Activated CD4-positive, alpha-beta memory T cell treated with anti-CD3 and anti-CD28 coated beads for 36 hours (primary cell): ENCODE measurements at regions of chr16 and their contacts with region 1.

Region 1: DNA sequence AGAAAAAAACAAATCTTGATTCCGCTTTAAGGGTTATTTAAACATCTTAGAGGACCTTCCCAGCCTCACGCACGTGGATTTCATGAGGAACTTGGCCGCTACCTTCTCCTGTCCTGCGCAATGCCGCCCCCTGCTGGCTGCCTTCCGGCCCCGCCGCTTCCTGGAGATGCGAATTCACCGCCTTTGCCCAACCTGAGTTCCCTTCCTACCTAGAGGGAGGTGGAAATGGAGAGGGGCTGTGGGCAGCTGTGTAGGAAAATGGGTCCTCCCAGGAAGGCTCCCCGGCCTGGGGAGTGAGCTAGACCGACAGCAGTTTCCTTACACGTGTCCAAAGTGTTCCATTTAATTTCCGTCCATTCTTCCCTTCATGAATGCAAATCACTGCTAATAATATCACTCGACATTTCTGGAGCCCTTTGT is 1.0 kb upstream of the ABCC12 start:
- DNase-seq: peak; percentile 89
- H3K4me3 Mint-ChIP-seq: no peak overlapping the region
- H3K27ac Mint-ChIP-seq: no peak overlapping the region
- H3K4me1 Mint-ChIP-seq: peaks cover 26% of the 10 kb centered on the region
- H3K27me3 Mint-ChIP-seq: peaks cover 18% of the 10 kb centered on the region

Region 2: GRCh38 chr16:46947900-46948547 is 1208.8 kb before region 1 on chr16:
- CTCF ChIA-PET with region 1: interaction called, 5 read pairs
- POLR2A ChIA-PET with region 1: no interaction called
- intact Hi-C with region 1: loop called (anchors 2 kb)
- DNase-seq: peak; percentile 57
- H3K4me3 Mint-ChIP-seq: no peak overlapping the region
- H3K27ac Mint-ChIP-seq: peak overlapping the region; percentile 76
- H3K4me1 Mint-ChIP-seq: peaks cover 34% of the 10 kb centered on the region
- H3K27me3 Mint-ChIP-seq: no peaks in the 10 kb centered on the region

Region 3: DNA sequence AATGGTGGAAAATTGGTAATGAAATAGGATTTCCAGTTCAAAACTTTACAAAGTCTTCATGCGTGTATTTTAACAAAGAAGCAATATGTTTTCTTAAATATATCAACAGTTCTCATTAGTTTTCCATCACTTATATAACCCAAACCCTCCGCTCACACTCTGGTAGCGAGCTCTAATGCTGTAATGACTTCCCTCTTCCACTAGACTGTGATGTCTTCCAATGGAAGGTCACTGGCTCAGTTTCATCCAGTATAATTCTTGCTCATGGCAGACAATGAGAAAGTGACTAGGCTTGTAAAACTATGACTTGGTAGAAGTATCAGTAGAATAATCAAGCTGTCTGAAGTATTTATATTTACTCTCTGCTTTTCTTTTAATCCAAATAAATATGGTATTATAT is 1045.9 kb before region 1 on chr16:
- CTCF ChIA-PET with region 1: no interaction called
- POLR2A ChIA-PET with region 1: no interaction called
- intact Hi-C with region 1: loop called (anchors 1 kb)
- DNase-seq: no peak
- H3K4me3 Mint-ChIP-seq: no peak overlapping the region
- H3K27ac Mint-ChIP-seq: no peak overlapping the region
- H3K4me1 Mint-ChIP-seq: peaks cover 21% of the 10 kb centered on the region
- H3K27me3 Mint-ChIP-seq: no peaks in the 10 kb centered on the region

Region 4: GRCh38 chr16:47574091-47575054 is 582.4 kb before region 1 on chr16:
- CTCF ChIA-PET with region 1: no interaction called
- POLR2A ChIA-PET with region 1: no interaction called
- intact Hi-C with region 1: loop called (anchors 10 kb)
- DNase-seq: peak; percentile 67
- H3K4me3 Mint-ChIP-seq: peak overlapping the region; percentile 26
- H3K27ac Mint-ChIP-seq: peak overlapping the region; percentile 80
- H3K4me1 Mint-ChIP-seq: peaks cover 64% of the 10 kb centered on the region
- H3K27me3 Mint-ChIP-seq: no peaks in the 10 kb centered on the region

Region 5: GRCh38 chr16:48054881-48055601 is 101.8 kb before region 1 on chr16:
- CTCF ChIA-PET with region 1: interaction called, 3 read pairs
- POLR2A ChIA-PET with region 1: no interaction called
- intact Hi-C with region 1: loop called (anchors 10 kb)
- DNase-seq: peak; percentile 44
- H3K4me3 Mint-ChIP-seq: no peak overlapping the region
- H3K27ac Mint-ChIP-seq: no peak overlapping the region
- H3K4me1 Mint-ChIP-seq: no peaks in the 10 kb centered on the region
- H3K27me3 Mint-ChIP-seq: peaks cover 24% of the 10 kb centered on the region

Region 6: GRCh38 chr16:48123104-48123788 is 33.6 kb before region 1 on chr16:
- CTCF ChIA-PET with region 1: interaction called, 12 read pairs
- POLR2A ChIA-PET with region 1: interaction called, 5 read pairs
- intact Hi-C with region 1: loop called (anchors 1 kb)
- DNase-seq: peak; percentile 87
- H3K4me3 Mint-ChIP-seq: no peak overlapping the region
- H3K27ac Mint-ChIP-seq: no peak overlapping the region
- H3K4me1 Mint-ChIP-seq: peaks cover 29% of the 10 kb centered on the region
- H3K27me3 Mint-ChIP-seq: peaks cover 12% of the 10 kb centered on the region